ENCODE measurements at regions of chr1 and their contacts with region 1.

Region 1: DNA sequence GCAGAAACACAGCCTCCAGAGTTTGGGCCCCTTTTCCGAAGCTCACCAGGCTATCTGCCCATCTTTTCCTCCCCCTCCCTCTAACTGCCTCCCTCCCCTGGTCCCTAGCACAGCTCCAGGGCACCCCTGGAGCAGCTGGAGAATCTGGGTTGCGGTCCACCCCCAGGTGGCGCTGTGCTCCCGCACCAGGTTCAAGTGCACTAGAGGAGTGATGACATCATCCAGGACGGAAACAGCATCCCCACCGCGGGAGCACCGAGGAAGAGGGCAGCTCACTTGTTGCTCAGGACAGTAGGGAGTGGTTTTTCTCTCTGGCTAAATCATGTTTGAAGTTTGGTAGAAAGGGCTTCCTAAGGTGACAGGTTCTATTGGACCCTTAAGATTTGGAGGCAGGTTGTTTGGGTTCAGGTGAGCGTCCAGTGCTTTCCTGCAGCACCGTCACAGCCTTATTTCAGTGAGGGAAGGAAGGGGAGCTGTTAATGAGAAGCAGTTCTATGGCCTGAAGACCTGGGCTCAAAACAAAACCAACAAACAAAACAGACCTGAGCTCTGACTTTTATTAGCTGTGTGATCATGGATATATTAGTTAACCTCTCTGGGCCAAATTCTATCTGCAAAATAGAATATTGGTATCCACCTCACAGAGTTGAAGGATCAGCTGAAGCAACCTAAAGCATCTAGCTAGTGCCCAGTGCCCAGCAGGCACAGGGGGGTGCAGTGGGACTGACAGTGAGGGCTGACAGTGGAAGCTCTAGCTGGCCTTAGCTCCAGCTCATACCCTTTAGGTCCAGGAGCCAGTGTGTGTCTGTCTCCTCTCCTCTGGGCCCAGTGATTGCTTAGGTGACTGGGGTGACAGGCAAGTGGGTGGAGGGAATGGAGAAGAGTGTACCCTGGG is 7.5 kb downstream of the SHISA4 start:
- DNase-seq: peak; percentile 98
- H3K4me3 ChIP-seq: peak overlapping the region in 1 of 4 donors; percentile 22
- H3K27ac ChIP-seq: peak overlapping the region; percentile 89 to 95 (median 92)
- H3K4me1 ChIP-seq: peaks cover 22 to 100% (median 98%) of the 10 kb centered on the region in 4 donors
- H3K27me3 ChIP-seq: no peaks in the 10 kb centered on the region
- CTCF ChIP-seq: peak; percentile 92 to 98 (median 94)
- EP300 ChIP-seq: no peak
- POLR2A ChIP-seq: no peak

Region 2: GRCh38 chr1:201916649-201917249 is 20.6 kb after region 1 on chr1:
- intact Hi-C with region 1: loop called (anchors 2 kb)
- DNase-seq: peak; percentile 96
- H3K4me3 ChIP-seq: peak overlapping the region; percentile 11 to 45 (median 20)
- H3K27ac ChIP-seq: peak overlapping the region; percentile 91 to 95 (median 94)
- H3K4me1 ChIP-seq: peaks cover 35 to 100% (median 100%) of the 10 kb centered on the region in 4 donors
- H3K27me3 ChIP-seq: peaks cover 0 to 3% (median 0%) of the 10 kb centered on the region in 4 donors
- CTCF ChIP-seq: no peak
- EP300 ChIP-seq: peak; percentile 59
- POLR2A ChIP-seq: no peak

Region 3: GRCh38 chr1:201946224-201946908 is 50.2 kb after region 1 on chr1 and contains the start of gene LMOD1:
- intact Hi-C with region 1: loop called (anchors 2 kb)
- DNase-seq: peak; percentile 97
- H3K4me3 ChIP-seq: peak within 1 kb of the TSS; percentile 74 to 91 (median 82)
- H3K27ac ChIP-seq: peak within 1 kb of the TSS; percentile 92 to 95 (median 94)
- H3K4me1 ChIP-seq: peaks cover 7 to 33% (median 18%) of the 10 kb centered on the region in 4 donors
- H3K27me3 ChIP-seq: no peaks in the 10 kb centered on the region
- CTCF ChIP-seq: peak in 1 of 3 experiments; percentile 6
- EP300 ChIP-seq: no peak
- POLR2A ChIP-seq: peak; percentile 78
- total RNA-seq, gene LMOD1: 1,021 to 1,618 (median 1,290) TPM

Measured in esophagus muscularis mucosa (tissue), 4 donors.